K562 (cell line): ENCODE measurements at regions of chr2 and their contacts with region 1.

Region 1: GRCh38 chr2:58769864-58770234 is 528.7 kb upstream of the FANCL start:
- DNase-seq: no peak
- ATAC-seq: no peak
- H3K4me3 ChIP-seq: no peak overlapping the region
- H3K27ac ChIP-seq: no peak overlapping the region
- H3K4me1 ChIP-seq: peaks cover 0 to 3% of the 10 kb centered on the region in 2 experiments; a peak in 1 of 5 replicates
- H3K27me3 ChIP-seq: no peaks in the 10 kb centered on the region
- CTCF ChIP-seq: no peak
- EP300 ChIP-seq: no peak
- POLR2A ChIP-seq: no peak
- RAD21 ChIP-seq: no peak

Region 2: GRCh38 chr2:58098254-58099095 is 671.4 kb before region 1 on chr2:
- CTCF ChIA-PET with region 1: no interaction called
- POLR2A ChIA-PET with region 1: no interaction called
- in situ Hi-C with region 1: no loop called
- intact Hi-C with region 1: no loop called
- DNase-seq: no peak
- ATAC-seq: peak; percentile 72
- H3K4me3 ChIP-seq: no peak overlapping the region
- H3K27ac ChIP-seq: no peak overlapping the region
- H3K4me1 ChIP-seq: peaks cover 0 to 2% of the 10 kb centered on the region in 2 experiments; a peak in 1 of 5 replicates
- H3K27me3 ChIP-seq: no peaks in the 10 kb centered on the region
- CTCF ChIP-seq: no peak
- EP300 ChIP-seq: no peak
- POLR2A ChIP-seq: no peak
- RAD21 ChIP-seq: no peak

Region 3: GRCh38 chr2:58476556-58476955 is 293.3 kb before region 1 on chr2:
- CTCF ChIA-PET with region 1: no interaction called
- POLR2A ChIA-PET with region 1: no interaction called
- in situ Hi-C with region 1: no loop called
- intact Hi-C with region 1: no loop called
- DNase-seq: no peak
- ATAC-seq: no peak
- H3K4me3 ChIP-seq: no peak overlapping the region
- H3K27ac ChIP-seq: no peak overlapping the region
- H3K4me1 ChIP-seq: no peaks in the 10 kb centered on the region
- H3K27me3 ChIP-seq: no peaks in the 10 kb centered on the region
- CTCF ChIP-seq: no peak
- EP300 ChIP-seq: no peak
- POLR2A ChIP-seq: no peak
- RAD21 ChIP-seq: no peak

Region 4: DNA sequence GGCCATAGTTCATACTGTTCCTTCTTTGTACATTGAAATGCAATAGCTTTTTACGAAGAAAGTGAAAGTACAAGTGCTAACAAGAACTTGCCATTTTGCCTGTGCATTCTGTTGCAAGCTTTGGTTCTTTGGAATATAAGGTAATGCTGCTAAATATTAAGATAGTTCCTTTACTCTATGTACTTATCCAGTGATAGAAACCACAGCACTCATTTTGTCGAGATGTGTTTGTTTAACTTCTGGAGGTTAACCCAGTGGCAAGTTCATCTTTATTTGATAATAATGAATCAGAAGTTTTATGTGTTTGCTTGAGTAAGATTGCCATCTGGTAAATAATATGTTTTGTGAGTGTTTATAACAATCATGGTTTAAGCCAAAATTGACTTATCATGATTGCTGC is 155.6 kb before region 1 on chr2:
- CTCF ChIA-PET with region 1: no interaction called
- POLR2A ChIA-PET with region 1: no interaction called
- in situ Hi-C with region 1: no loop called
- intact Hi-C with region 1: no loop called
- DNase-seq: no peak
- ATAC-seq: no peak; the same call in 2 of the 3 replicates
- H3K4me3 ChIP-seq: no peak overlapping the region
- H3K27ac ChIP-seq: no peak overlapping the region
- H3K4me1 ChIP-seq: no peaks in the 10 kb centered on the region
- H3K27me3 ChIP-seq: no peaks in the 10 kb centered on the region
- CTCF ChIP-seq: no peak
- EP300 ChIP-seq: no peak
- POLR2A ChIP-seq: no peak
- RAD21 ChIP-seq: no peak

Region 5: DNA sequence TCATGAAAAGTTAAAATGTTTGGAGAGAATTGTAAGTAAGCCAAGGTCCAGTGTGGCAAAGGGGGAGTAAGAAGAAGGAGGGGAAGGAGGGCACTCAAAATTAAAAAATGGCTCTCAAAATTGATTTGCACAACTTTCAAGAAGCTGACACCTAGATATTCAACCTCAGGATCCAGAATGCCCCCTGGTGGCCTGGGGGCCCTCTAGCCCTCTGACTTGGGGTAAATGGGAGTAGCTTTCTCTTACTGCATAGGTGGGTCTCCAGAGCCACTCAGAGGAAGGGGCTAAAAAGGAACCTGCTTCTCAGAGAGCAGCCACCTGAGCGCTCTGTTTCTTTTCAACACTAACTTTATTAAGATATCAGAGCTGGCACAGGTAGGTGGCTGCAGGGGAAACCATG is 815.1 kb after region 1 on chr2:
- CTCF ChIA-PET with region 1: no interaction called
- POLR2A ChIA-PET with region 1: no interaction called
- in situ Hi-C with region 1: no loop called
- intact Hi-C with region 1: loop called (anchors 5 kb)
- DNase-seq: peak in 2 of 4 experiments; percentile 3 to 4
- ATAC-seq: no peak
- H3K4me3 ChIP-seq: no peak overlapping the region
- H3K27ac ChIP-seq: no peak overlapping the region
- H3K4me1 ChIP-seq: no peaks in the 10 kb centered on the region
- H3K27me3 ChIP-seq: no peaks in the 10 kb centered on the region
- CTCF ChIP-seq: peak in 1 of 3 experiments; percentile 7; a peak in 1 of 6 replicates
- EP300 ChIP-seq: no peak
- POLR2A ChIP-seq: no peak
- RAD21 ChIP-seq: peak in 1 of 2 experiments; percentile 22; a peak in 2 of 4 replicates